CD4-positive, alpha-beta memory T cell (primary cell): ENCODE measurements at regions of chr1 and their contacts with region 1.

Region 1: GRCh38 chr1:10507111-10507879 is 32.5 kb downstream of the PEX14 start:
- DNase-seq: peak; percentile 55 to 71 (median 56)
- H3K4me3 ChIP-seq: no peak overlapping the region
- H3K4me3 Mint-ChIP-seq: peak overlapping the region in 2 of 8 donors; percentile 33 to 72
- H3K27ac ChIP-seq: no peak overlapping the region
- H3K27ac Mint-ChIP-seq: peak overlapping the region; percentile 26 to 91 (median 74)
- H3K4me1 ChIP-seq: peaks cover 41% of the 10 kb centered on the region
- H3K4me1 Mint-ChIP-seq: peaks cover 31 to 53% (median 44%) of the 10 kb centered on the region in 4 donors
- H3K27me3 ChIP-seq: no peaks in the 10 kb centered on the region
- H3K27me3 Mint-ChIP-seq: no peaks in the 10 kb centered on the region

Region 2: DNA sequence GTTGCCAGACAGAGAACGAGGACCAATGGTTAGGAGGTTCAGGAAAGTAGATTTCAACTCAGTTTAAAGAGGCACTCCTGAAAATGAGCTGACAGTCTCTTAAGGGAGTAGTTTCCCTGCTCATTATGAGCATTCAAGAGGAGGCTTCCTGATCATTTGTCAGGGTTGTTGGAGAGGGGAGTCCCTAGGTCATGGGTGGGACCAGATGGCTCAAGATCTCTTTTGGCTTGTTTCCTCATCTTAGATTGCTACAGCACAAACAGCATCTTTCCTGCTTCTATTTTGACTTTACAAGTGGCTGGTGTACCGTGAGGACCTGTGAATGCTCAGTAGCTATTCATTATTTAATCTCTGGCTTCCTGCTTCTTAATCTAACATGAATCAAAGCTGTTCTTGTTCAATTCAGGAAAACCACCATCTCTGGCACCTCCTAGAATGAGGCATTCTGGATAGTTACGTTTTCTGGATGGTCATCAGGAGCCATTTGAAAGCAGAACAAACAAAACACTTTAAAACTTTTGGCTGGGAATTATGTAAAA is 15.1 kb after region 1 on chr1:
- CTCF ChIA-PET with region 1: interaction called, 42 read pairs
- POLR2A ChIA-PET with region 1: interaction called, 12 read pairs
- intact Hi-C with region 1: no loop called
- DNase-seq: no peak
- H3K4me3 ChIP-seq: no peak overlapping the region
- H3K4me3 Mint-ChIP-seq: peak overlapping the region in 1 of 8 donors; percentile 40
- H3K27ac ChIP-seq: no peak overlapping the region
- H3K27ac Mint-ChIP-seq: peak overlapping the region in 4 of 7 donors; percentile 13 to 66 (median 45)
- H3K4me1 ChIP-seq: peaks cover 26% of the 10 kb centered on the region
- H3K4me1 Mint-ChIP-seq: peaks cover 26 to 53% (median 38%) of the 10 kb centered on the region in 4 donors
- H3K27me3 ChIP-seq: no peaks in the 10 kb centered on the region
- H3K27me3 Mint-ChIP-seq: no peaks in the 10 kb centered on the region

Region 3: GRCh38 chr1:10561955-10562354 is 54.7 kb after region 1 on chr1:
- CTCF ChIA-PET with region 1: interaction called, 9 read pairs
- POLR2A ChIA-PET with region 1: interaction called, 4 read pairs
- intact Hi-C with region 1: loop called (anchors 1 kb)
- DNase-seq: no peak
- H3K4me3 ChIP-seq: no peak overlapping the region
- H3K4me3 Mint-ChIP-seq: no peak overlapping the region
- H3K27ac ChIP-seq: no peak overlapping the region
- H3K27ac Mint-ChIP-seq: peak overlapping the region in 1 of 7 donors; percentile 61
- H3K4me1 ChIP-seq: no peaks in the 10 kb centered on the region
- H3K4me1 Mint-ChIP-seq: peaks cover 0 to 10% (median 5%) of the 10 kb centered on the region in 4 donors
- H3K27me3 ChIP-seq: no peaks in the 10 kb centered on the region
- H3K27me3 Mint-ChIP-seq: no peaks in the 10 kb centered on the region

Region 4: GRCh38 chr1:10694633-10695627 is 187.6 kb after region 1 on chr1:
- CTCF ChIA-PET with region 1: interaction called, 16 read pairs
- POLR2A ChIA-PET with region 1: no interaction called
- intact Hi-C with region 1: loop called (anchors 2 kb)
- DNase-seq: peak; percentile 74 to 86 (median 81)
- H3K4me3 ChIP-seq: peak overlapping the region in 1 of 2 donors; percentile 41
- H3K4me3 Mint-ChIP-seq: peak overlapping the region; percentile 76 to 92 (median 84)
- H3K27ac ChIP-seq: peak overlapping the region; percentile 22
- H3K27ac Mint-ChIP-seq: peak overlapping the region in 6 of 7 donors; percentile 62 to 96 (median 84)
- H3K4me1 ChIP-seq: peaks cover 21% of the 10 kb centered on the region
- H3K4me1 Mint-ChIP-seq: peaks cover 10 to 33% (median 17%) of the 10 kb centered on the region in 4 donors
- H3K27me3 ChIP-seq: no peaks in the 10 kb centered on the region
- H3K27me3 Mint-ChIP-seq: peaks cover 0 to 1% of the 10 kb centered on the region in 2 donors

Region 5: GRCh38 chr1:10867138-10867721 is 359.9 kb after region 1 on chr1:
- CTCF ChIA-PET with region 1: interaction called, 8 read pairs
- POLR2A ChIA-PET with region 1: interaction called, 7 read pairs
- intact Hi-C with region 1: loop called (anchors 1 kb)
- DNase-seq: peak; percentile 58 to 67 (median 61)
- H3K4me3 ChIP-seq: peak overlapping the region in 1 of 2 donors; percentile 34
- H3K4me3 Mint-ChIP-seq: peak overlapping the region in 4 of 8 donors; percentile 32 to 80 (median 67)
- H3K27ac ChIP-seq: no peak overlapping the region
- H3K27ac Mint-ChIP-seq: peak overlapping the region in 1 of 7 donors; percentile 29
- H3K4me1 ChIP-seq: peaks cover 13% of the 10 kb centered on the region
- H3K4me1 Mint-ChIP-seq: peaks cover 4 to 18% (median 12%) of the 10 kb centered on the region in 4 donors
- H3K27me3 ChIP-seq: peaks cover 25% of the 10 kb centered on the region
- H3K27me3 Mint-ChIP-seq: peaks cover 26 to 55% of the 10 kb centered on the region in 2 donors

Region 6: GRCh38 chr1:10909697-10910671 is 402.7 kb after region 1 on chr1:
- CTCF ChIA-PET with region 1: interaction called, 27 read pairs
- POLR2A ChIA-PET with region 1: interaction called, 6 read pairs
- intact Hi-C with region 1: loop called (anchors 1 kb)
- DNase-seq: peak; percentile 60 to 72 (median 64)
- H3K4me3 ChIP-seq: no peak overlapping the region
- H3K4me3 Mint-ChIP-seq: no peak overlapping the region
- H3K27ac ChIP-seq: no peak overlapping the region
- H3K27ac Mint-ChIP-seq: no peak overlapping the region
- H3K4me1 ChIP-seq: peaks cover 17% of the 10 kb centered on the region
- H3K4me1 Mint-ChIP-seq: peaks cover 1 to 23% (median 7%) of the 10 kb centered on the region in 4 donors
- H3K27me3 ChIP-seq: no peaks in the 10 kb centered on the region
- H3K27me3 Mint-ChIP-seq: peaks cover 3 to 4% of the 10 kb centered on the region in 2 donors

Region 7: DNA sequence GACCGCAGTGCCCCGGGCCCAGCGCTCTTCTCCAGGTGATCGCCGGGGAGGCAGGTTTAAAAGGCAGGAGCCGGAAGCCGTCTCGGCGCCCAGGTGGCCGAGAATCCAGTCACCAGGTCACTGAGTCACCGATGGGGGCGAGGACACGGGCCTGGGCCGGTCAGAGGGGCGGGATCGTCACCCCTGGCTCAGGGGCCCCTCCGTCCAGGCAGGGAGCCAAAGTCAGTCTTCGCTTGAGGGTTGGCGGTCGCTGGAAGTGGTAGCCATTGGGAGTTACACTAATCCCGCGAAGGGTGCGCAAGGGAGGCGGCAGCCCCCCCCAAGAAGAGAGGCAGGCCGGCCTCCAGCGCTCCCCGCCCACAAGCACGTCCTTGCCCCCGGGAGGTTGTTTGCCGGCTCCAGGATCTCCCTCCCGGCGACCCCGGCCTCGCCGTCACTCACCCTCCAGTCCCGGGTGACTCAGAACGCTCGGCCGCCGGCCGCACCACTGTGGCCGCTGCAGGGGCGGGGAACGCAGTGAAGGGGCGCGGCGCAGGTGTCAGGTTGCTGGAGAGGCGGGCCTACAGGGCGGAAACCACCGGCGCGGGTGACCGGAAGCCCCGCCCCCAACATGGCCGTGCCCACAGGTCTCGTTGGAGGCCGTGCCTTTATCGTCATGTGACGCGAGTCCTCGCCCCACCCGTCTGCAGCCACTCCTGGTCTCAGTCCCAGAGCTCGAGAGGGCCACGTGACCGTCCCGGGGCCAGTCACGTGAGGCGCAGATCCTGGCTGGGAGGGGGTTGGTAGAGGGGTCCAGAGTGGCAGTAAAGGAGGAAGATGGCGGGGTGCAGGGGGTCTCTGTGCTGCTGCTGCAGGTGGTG is 1298.4 kb after region 1 on chr1 and contains the starts of genes CLCN6 and MTHFR:
- CTCF ChIA-PET with region 1: no interaction called
- POLR2A ChIA-PET with region 1: no interaction called
- intact Hi-C with region 1: loop called (anchors 5 kb)
- DNase-seq: peak; percentile 97 to 99 (median 98)
- H3K4me3 ChIP-seq: peak within 1 kb of the TSS; percentile 37 to 86
- H3K4me3 Mint-ChIP-seq: peak within 1 kb of the TSS; percentile 96 to 100 (median 98)
- H3K27ac ChIP-seq: peak within 1 kb of the TSS; percentile 73
- H3K27ac Mint-ChIP-seq: peak within 1 kb of the TSS; percentile 92 to 100 (median 99)
- H3K4me1 ChIP-seq: peaks cover 55% of the 10 kb centered on the region
- H3K4me1 Mint-ChIP-seq: peaks cover 35 to 76% (median 58%) of the 10 kb centered on the region in 4 donors
- H3K27me3 ChIP-seq: no peaks in the 10 kb centered on the region
- H3K27me3 Mint-ChIP-seq: no peaks in the 10 kb centered on the region
- total RNA-seq, gene CLCN6: 20.8 to 20.9 TPM
- total RNA-seq, gene MTHFR: 52.7 to 54.2 TPM